ENCODE measurements at regions of chr1 and their contacts with region 1.

Region 1: GRCh38 chr1:230310381-230311163 is 115.6 kb downstream of the PGBD5 start:
- DNase-seq: peak; percentile 96
- ATAC-seq: peak; percentile 60
- H3K4me3 ChIP-seq: no peak overlapping the region
- H3K27ac ChIP-seq: no peak overlapping the region
- H3K4me1 ChIP-seq: peaks cover 19% of the 10 kb centered on the region
- H3K27me3 ChIP-seq: peaks cover 20% of the 10 kb centered on the region; the same call in 1 of the 2 replicates
- CTCF ChIP-seq: peak; percentile 100

Region 2: DNA sequence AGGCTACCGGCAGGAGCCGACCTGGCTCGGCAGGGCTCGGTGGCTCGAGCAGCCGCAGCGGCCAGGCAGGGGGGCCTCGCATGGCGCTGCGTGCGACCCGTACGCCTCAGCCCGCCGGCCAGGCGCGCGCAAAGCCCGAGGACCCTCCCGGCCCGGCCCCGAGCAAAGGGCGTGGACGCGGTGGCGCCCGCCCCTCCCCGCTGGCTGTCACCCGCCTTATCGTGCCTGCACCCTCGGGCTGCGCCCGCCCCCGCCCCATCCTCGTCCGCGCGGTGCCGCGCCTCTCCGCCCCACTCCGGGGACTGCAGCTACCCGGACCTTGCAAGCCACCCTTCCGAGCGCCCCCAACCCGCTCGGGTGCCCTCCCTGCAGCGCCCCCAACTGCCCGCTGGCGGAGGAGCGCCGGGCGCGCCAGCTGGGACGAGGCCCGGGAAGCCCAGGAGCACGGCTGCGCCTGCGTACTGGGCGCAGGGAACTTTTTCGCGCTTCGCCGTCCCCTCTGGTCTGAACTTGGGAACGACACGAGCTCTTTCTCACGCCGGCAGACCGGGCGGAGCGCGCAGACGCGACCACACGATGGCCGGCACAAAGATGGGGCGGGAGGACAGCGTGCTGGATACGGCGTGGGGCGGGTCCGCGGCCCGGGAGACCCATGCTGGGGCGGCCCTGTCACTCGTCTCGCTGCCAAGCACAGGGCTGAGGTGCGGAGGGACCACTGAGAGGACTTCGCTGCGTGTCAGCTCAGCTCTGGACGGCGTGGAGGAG is 751.8 kb before region 1 on chr1 and contains the start of gene ABCB10:
- CTCF ChIA-PET with region 1: no interaction called
- POLR2A ChIA-PET with region 1: no interaction called
- intact Hi-C with region 1: loop called (anchors 1 kb)
- DNase-seq: peak; percentile 100
- ATAC-seq: peak; percentile 86
- H3K4me3 ChIP-seq: peak within 1 kb of the TSS; percentile 91
- H3K27ac ChIP-seq: peak within 1 kb of the TSS; percentile 43
- H3K4me1 ChIP-seq: peaks cover 23% of the 10 kb centered on the region
- H3K27me3 ChIP-seq: no peaks in the 10 kb centered on the region
- CTCF ChIP-seq: peak; percentile 93
- total RNA-seq, gene ABCB10: 27.4 and 30.4 TPM in 2 replicates

Region 3: DNA sequence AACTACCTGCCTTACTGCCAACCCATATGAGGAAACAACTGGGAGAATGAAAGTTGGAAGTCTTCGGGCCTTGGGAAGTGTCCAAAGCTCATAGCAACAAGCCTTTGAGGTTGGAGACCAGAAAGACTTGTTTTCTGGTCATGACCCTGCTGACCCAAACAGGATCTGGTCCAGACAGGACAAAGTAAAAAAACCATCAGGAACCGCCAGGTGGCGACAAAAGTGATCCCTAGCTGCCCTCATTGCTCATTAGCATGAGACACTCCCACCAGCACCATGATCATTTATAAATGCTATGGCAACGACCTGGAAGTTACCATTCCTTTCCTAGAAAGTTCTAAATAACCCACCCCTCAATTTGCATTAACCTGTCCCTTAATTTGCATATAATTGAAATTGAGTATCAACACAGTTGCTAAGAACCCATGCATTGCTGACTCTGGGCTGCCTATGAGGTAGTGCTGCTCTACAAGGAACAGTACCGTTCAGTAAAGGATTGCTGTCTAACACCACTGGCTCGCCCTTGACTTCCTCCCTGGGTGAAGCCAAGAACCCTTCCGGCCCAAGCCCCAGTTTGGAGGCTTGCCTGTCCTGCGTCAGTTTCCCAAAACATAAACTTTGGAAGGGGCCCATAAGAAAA is 595.5 kb before region 1 on chr1:
- CTCF ChIA-PET with region 1: no interaction called
- POLR2A ChIA-PET with region 1: no interaction called
- intact Hi-C with region 1: loop called (anchors 1 kb)
- DNase-seq: peak; percentile 82
- ATAC-seq: peak; percentile 57
- H3K4me3 ChIP-seq: no peak overlapping the region
- H3K27ac ChIP-seq: no peak overlapping the region
- H3K4me1 ChIP-seq: no peaks in the 10 kb centered on the region
- H3K27me3 ChIP-seq: no peaks in the 10 kb centered on the region
- CTCF ChIP-seq: peak; percentile 89

Region 4: DNA sequence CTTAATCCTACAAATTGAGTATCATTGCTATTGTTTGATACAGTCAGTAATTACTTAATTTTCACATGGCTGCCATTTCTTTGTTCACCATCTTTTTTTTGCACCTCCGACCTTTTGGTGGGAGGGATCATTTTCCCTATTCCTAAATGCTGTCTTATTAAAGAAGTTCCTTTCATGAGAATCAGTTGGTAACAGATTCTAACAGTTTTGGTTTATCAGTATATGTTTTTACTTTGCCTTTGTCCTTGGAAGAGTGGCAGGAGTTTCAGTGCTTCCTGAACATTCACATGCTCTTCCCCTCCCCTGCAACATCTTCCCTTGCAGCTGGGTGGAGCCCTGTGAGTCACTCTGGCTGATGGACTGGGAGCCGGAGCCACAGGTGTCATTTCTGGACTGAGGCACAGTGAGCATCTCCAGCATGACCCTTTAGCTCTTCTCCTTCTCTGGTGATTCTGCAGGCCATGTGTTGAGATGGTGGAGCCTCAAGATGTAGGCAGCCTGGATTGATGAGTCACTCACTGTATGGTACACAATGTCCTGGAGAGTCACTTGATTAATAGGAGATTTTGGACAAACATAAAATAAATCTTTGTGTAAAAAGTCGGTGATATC is 466.8 kb before region 1 on chr1:
- CTCF ChIA-PET with region 1: no interaction called
- POLR2A ChIA-PET with region 1: no interaction called
- intact Hi-C with region 1: loop called (anchors 5 kb)
- DNase-seq: peak; percentile 77
- ATAC-seq: peak; percentile 86
- H3K4me3 ChIP-seq: no peak overlapping the region
- H3K27ac ChIP-seq: no peak overlapping the region
- H3K4me1 ChIP-seq: peaks cover 19% of the 10 kb centered on the region
- H3K27me3 ChIP-seq: peaks cover 19% of the 10 kb centered on the region
- CTCF ChIP-seq: peak; percentile 45

Region 5: DNA sequence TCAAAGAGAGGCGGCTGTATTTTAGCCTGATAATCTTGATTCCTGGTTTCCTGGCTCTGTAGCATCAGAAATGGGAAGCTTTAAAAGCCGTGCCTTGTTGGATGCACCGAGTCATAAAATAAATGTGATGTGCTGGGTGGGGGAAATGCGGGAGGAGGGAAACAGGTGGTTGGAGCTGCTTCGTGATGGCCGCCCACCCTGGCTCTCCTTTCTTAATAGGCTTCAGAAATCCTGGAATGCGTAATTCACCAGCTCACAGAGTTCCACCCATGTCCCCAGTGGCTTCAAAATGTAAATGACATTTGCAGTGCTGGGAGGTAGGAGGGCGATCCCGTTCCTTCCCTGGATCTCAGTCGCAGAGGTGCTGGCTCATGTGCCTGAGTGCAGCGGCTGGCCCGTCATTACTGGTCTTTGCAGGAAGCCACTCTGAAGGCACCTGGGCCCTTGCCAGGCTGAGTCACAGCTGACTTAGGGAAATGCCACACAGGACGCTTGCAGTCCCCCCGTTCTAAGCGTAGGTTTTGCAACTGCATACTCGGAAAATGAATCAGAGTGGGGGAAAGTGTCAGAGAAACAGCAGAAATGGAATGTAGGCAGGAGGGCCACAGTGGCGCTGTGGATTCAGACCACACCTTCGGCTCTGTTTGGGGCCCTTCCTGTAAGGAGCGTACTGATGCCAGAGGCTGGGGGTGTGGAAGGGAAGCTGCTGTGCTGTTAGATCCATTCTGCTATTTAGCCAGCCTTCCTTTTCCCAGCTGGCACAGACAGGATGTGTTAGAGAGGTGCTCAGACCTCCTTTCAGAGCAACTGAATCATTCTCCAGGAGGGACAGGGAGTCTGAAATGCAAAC is 206.0 kb before region 1 on chr1:
- CTCF ChIA-PET with region 1: no interaction called
- POLR2A ChIA-PET with region 1: interaction called, 4 read pairs
- intact Hi-C with region 1: loop called (anchors 10 kb)
- DNase-seq: peak; percentile 100
- ATAC-seq: peak; percentile 86
- H3K4me3 ChIP-seq: peak overlapping the region; percentile 57
- H3K27ac ChIP-seq: peak overlapping the region; percentile 95
- H3K4me1 ChIP-seq: peaks cover 70% of the 10 kb centered on the region
- H3K27me3 ChIP-seq: no peaks in the 10 kb centered on the region
- CTCF ChIP-seq: peak; percentile 20; the same call in 1 of the 2 replicates

Region 6: DNA sequence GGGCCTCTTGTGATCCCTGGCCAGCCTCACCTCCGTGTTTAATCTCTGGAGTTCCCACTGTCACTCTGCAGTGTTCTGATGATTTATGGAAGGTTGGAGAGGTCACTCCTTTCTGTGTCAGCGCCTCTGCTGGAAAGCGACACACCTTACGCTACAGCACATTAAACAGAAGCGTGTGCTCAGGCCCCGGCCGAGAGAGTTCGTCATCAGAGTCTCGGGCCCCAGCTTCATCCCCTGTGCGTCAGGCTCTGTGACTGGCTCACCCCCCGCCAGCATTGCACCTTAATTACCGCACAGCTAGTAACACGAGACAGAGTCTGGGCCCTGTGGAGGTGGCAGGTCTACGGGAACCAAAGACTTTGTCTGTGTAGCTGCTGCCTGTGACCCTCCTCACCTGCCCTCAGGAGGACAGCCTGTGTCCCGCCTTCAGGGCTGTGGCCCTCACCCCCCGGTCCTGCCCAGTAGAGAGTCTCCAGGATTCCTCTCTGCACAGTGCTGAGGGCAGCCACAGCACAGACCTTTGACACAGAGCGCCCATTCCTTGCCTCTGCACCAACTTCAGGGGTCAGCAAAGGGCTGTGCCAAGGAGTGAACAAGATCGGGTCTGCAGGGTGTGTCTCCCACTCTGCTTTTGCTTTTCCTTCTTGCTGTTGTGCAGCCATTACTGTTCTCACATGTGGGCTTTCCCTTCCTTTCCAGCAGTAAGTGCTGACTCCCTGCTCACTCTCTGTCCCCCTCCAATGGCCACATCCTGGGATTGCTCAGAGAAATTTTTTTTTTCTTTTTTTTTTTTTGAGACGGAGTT is 42.0 kb before region 1 on chr1:
- CTCF ChIA-PET with region 1: no interaction called
- POLR2A ChIA-PET with region 1: no interaction called
- intact Hi-C with region 1: loop called (anchors 1 kb)
- DNase-seq: peak; percentile 80
- ATAC-seq: peak; percentile 83
- H3K4me3 ChIP-seq: no peak overlapping the region
- H3K27ac ChIP-seq: peak overlapping the region; percentile 8; the same call in 1 of the 2 replicates
- H3K4me1 ChIP-seq: peaks cover 4% of the 10 kb centered on the region; the same call in 1 of the 2 replicates
- H3K27me3 ChIP-seq: no peaks in the 10 kb centered on the region
- CTCF ChIP-seq: peak; percentile 85

Measured in PC-3 (cell line).